Panc1 (cell line): ENCODE measurements at regions of chr12 and their contacts with region 1.

Region 1: GRCh38 chr12:50504798-50505385 is at the start of gene DIP2B:
- DNase-seq: peak; percentile 80
- ATAC-seq: peak; percentile 93
- H3K4me3 ChIP-seq: peak within 1 kb of the TSS; percentile 72 to 76
- H3K27ac ChIP-seq: peak within 1 kb of the TSS; percentile 87
- H3K4me1 ChIP-seq: peaks cover 23% of the 10 kb centered on the region
- H3K27me3 ChIP-seq: no peaks in the 10 kb centered on the region
- CTCF ChIP-seq: peak; percentile 94
- total RNA-seq, gene DIP2B: 30.2 TPM

Region 2: GRCh38 chr12:50019524-50019923 is 485.4 kb before region 1 on chr12:
- CTCF ChIA-PET with region 1: no interaction called
- POLR2A ChIA-PET with region 1: interaction called, 11 read pairs
- in situ Hi-C with region 1: no loop called
- intact Hi-C with region 1: no loop called
- DNase-seq: no peak
- ATAC-seq: no peak
- H3K4me3 ChIP-seq: no peak overlapping the region
- H3K27ac ChIP-seq: no peak overlapping the region
- H3K4me1 ChIP-seq: peaks cover 33% of the 10 kb centered on the region
- H3K27me3 ChIP-seq: no peaks in the 10 kb centered on the region
- CTCF ChIP-seq: no peak

Region 3: GRCh38 chr12:50517456-50518048 is 12.7 kb after region 1 on chr12:
- CTCF ChIA-PET with region 1: no interaction called
- POLR2A ChIA-PET with region 1: interaction called, 10 read pairs
- in situ Hi-C with region 1: no loop called
- intact Hi-C with region 1: no loop called
- DNase-seq: no peak
- ATAC-seq: peak; percentile 43; the same call in 1 of the 2 replicates
- H3K4me3 ChIP-seq: no peak overlapping the region
- H3K27ac ChIP-seq: peak overlapping the region; percentile 49
- H3K4me1 ChIP-seq: peaks cover 12% of the 10 kb centered on the region
- H3K27me3 ChIP-seq: no peaks in the 10 kb centered on the region
- CTCF ChIP-seq: no peak

Region 4: DNA sequence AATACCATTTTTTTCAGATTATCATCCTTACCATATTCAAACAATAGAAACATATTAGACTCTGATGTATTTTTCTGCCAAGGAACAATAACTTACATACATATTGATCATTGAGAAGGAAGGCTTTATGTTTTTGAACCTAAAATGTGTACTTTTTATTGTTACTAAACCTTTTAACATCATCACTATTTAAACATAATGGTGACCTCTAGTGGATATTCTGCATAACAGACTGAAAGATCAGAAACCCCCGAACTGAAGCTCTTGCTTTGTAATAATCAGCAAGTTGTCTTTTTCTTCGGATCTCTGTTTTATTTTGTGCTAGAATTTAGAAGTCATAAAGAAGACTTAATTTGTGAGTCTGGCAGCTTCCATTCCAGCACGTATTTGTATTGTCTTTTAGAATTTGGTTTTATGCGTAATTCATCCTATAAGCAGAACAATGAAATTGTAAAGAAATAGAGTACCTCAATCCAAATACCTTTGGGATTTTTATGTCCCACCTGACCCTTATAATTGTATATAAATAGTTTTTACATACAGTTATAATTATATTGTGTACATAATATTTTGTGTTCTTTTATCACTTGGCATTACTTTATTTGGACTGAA is 133.1 kb after region 1 on chr12:
- CTCF ChIA-PET with region 1: interaction called, 13 read pairs
- POLR2A ChIA-PET with region 1: no interaction called
- in situ Hi-C with region 1: no loop called
- intact Hi-C with region 1: loop called (anchors 2 kb)
- DNase-seq: no peak
- ATAC-seq: 0 out of 2 replicates have a peak, but pooled peaks have one; percentile 64
- H3K4me3 ChIP-seq: no peak overlapping the region
- H3K27ac ChIP-seq: no peak overlapping the region
- H3K4me1 ChIP-seq: peaks cover 10% of the 10 kb centered on the region
- H3K27me3 ChIP-seq: no peaks in the 10 kb centered on the region
- CTCF ChIP-seq: peak; percentile 65; the same call in 1 of the 2 replicates

Region 5: DNA sequence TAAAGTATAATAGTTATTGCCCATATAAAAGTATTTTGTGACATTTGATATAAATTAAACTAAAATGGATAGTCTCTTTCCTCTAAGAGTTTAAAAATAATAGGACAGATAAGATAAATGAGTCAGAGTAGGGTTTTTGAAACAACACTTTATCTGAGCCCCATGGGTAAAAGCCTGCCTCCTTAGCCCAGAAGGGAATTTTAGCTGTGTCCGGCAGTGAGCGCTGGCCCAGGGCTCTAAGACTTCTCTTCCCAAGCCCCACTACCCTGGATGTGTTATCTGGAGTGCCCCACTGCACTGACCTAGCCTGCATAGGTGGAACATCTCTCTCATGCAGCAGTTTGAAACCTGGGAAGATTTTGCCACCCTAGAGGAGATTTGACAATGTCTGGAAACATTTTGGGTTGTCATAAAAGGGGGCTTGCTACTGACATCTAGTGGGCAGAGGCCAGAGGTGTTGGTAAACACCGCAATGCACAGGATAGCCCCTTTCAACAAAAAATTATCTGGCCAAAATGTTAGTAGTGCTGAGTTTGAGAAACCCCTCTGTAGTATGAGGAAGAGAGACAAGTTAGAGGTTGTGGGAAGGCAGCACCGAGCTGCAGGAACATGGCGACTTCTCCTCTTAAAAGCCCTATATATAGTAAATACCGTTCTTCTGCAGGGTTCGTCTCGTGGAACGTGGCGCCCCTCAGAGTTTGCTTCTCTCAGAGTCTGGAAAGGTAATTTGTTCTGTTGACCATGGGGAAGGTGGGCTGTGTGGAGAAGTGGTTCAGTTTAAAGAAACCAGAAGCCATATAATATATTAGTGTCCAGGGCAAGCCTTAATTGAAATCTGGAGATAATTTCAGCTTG is 229.7 kb after region 1 on chr12:
- CTCF ChIA-PET with region 1: no interaction called
- POLR2A ChIA-PET with region 1: no interaction called
- in situ Hi-C with region 1: no loop called
- intact Hi-C with region 1: loop called (anchors 10 kb)
- DNase-seq: peak; percentile 12
- ATAC-seq: peak; percentile 73; the same call in 1 of the 2 replicates
- H3K4me3 ChIP-seq: no peak overlapping the region
- H3K27ac ChIP-seq: no peak overlapping the region
- H3K4me1 ChIP-seq: no peaks in the 10 kb centered on the region
- H3K27me3 ChIP-seq: no peaks in the 10 kb centered on the region
- CTCF ChIP-seq: peak; percentile 86